ENCODE measurements at regions of chr4 and their contacts with region 1.

Region 1: DNA sequence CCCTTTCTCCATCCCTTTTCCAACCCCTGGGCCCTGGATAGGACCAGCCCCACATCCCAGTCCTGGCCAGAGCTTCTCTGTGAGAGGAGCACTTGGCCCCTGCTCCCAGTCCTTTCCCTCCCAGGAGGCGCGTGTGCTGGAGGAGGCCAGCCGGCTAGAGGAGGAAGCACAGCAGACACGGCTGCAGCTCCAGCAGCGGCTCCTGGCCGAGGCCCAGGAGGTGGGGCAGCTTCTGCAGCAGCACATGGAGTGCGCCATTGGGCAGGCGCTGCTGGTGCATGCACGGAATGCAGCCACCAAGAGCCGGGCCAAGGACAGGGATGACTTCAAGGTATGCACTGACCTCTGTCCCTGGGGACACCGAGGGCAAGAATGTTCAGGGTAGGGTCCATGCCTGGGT is 87.5 kb downstream of the EVC start:
- DNase-seq: peak in 3 of 42 donors; percentile 10 to 22 (median 21)

Region 2: DNA sequence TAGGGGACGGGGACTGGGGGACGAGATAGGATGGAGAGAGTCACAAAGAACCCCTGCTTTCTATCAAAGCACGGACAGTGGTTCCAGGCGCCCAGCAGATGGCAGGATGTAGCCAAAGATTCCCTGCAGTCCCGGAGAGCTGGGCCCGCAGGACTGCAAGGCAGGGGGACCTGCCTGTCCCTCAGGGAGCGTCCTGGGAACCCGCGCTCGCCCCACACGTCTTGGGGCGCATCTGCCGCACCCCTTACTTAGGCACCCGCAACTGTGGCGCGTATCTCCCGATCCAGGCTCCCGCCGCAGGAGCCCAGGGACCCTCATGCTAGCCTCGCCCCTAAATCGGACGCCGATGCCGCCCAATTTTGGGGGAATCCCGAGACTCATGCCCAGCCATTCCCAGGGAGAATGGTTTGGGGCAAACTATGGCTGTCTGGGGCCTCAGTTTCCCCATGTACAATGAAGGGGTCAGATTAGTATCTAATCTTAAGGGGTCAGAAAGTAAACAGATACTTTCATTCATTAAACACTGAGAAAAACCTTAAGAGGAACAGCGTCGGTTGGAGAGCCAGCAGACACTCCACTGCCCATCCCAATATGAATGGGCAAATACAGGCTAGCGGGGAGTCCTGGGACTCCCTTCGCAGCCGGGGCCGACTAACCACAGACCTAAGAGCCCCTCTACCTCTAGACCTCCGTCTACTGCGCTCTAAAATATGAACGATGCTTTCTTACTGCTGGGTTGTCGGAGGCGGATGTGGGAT is 747.8 kb before region 1 on chr4:
- intact Hi-C with region 1: loop called (anchors 5 kb)
- DNase-seq: peak; percentile 61 to 92 (median 83)

Region 3: GRCh38 chr4:7462509-7462971 is 1664.1 kb after region 1 on chr4:
- intact Hi-C with region 1: no loop called
- DNase-seq: peak in 37 of 42 donors; percentile 29 to 78 (median 60)

Measured in head of caudate nucleus (tissue), 42 donors.